WTC11 (cell line): ENCODE measurements at regions of chr5 and their contacts with region 1.

Region 1: GRCh38 chr5:175534070-175534932 is 55.9 kb downstream of the SFXN1 start:
- DNase-seq: peak; percentile 92
- ATAC-seq: peak; percentile 89
- H3K4me3 Mint-ChIP-seq: peak overlapping the region; percentile 33
- H3K27ac Mint-ChIP-seq: no peak overlapping the region
- H3K4me1 Mint-ChIP-seq: peaks cover 41% of the 10 kb centered on the region
- H3K27me3 Mint-ChIP-seq: no peaks in the 10 kb centered on the region
- CTCF ChIP-seq: peak; percentile 99

Region 2: DNA sequence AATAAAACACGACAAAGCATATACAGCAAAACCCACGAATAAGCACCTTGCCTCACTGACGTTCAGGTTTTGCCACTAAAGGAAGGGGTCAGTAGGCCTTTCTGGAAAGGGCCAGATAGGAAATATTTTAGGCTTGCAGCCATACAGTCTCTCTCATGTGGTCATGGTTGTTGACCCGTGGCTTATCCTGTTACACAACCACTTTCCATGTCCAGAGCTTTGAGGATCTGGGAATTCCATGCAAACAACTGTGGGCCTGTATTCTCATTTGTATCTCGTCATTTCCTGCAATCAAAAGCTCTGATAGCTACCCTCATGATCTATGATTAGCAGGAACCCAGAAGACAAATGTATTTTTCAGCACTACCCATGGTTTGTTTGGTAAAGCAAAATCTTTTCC is 198.6 kb before region 1 on chr5:
- CTCF ChIA-PET with region 1: no interaction called
- POLR2A ChIA-PET with region 1: no interaction called
- DNase-seq: no peak
- ATAC-seq: no peak
- H3K4me3 Mint-ChIP-seq: no peak overlapping the region
- H3K27ac Mint-ChIP-seq: no peak overlapping the region
- H3K4me1 Mint-ChIP-seq: peaks cover 4% of the 10 kb centered on the region; the same call in 1 of the 2 replicates
- H3K27me3 Mint-ChIP-seq: no peaks in the 10 kb centered on the region; the same call in 1 of the 2 replicates
- CTCF ChIP-seq: no peak

Region 3: DNA sequence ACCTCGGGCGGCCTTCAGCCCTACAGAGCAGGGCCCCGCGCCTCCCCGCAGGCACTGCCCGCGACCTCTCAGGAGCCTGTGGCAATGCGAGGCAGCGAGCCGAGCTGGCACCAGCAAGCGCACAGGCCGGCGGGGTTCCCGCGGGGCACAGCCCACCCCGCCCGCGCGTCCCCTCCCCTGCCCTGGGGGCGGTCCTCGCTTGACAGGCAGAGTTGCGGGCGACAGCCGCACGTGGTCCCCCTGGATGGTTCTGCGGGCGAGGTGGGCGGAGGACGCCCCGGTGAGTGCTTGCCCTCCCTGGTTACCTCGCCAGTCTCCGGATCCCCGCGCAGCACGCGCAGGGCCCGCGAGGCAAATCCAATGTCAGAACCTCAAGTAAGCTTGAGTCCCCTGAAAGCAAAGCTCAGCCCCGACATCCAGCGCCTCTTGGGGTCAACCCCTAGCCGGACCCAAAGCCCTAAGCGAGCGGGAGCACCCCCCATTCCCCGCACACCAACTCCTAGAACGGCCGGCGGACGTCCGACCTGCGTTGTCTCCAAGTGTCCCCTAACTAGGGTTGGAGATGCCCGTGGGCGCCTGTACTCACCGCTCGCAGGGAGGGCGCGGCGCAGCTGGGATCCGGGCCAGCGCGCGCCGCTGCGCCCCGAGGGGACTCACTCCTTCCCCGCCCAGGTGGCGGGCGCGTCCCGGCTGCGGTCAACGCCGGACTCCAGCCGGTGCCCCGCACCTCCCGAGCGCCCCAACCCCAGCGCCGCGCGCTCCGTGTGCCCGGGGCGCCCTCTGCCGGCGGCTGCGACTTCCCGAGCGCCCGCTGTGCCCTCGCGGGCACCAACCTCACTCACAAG is 90.0 kb before region 1 on chr5 and contains the start of gene DRD1:
- CTCF ChIA-PET with region 1: no interaction called
- POLR2A ChIA-PET with region 1: no interaction called
- DNase-seq: peak; percentile 79
- ATAC-seq: peak; percentile 84
- H3K4me3 Mint-ChIP-seq: peak within 1 kb of the TSS; percentile 71
- H3K27ac Mint-ChIP-seq: no peak within 1 kb of the TSS
- H3K4me1 Mint-ChIP-seq: peaks cover 33% of the 10 kb centered on the region
- H3K27me3 Mint-ChIP-seq: peaks cover 63% of the 10 kb centered on the region
- CTCF ChIP-seq: peak; percentile 87
- total RNA-seq, gene DRD1: 0.07 TPM in 2 of 3 replicates, not detected in the other

Region 4: DNA sequence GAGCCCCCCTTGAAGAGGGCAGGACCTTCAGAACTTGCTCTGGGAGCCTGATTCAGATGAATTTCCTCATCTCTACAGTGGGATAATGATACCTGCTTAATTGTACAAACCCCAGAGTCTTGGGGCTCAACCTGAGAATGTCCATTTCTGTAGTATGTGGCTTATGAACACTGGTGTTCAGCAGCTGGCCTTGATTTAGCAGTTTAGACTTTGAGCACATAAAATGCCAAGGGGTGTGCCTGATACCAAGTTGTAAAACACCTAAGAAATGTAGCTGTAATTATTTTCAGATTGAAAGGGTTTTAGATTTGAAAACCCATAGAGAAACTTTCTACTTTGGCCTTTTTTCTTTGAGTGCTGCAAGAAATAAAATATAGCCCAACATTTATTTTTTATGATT is 11.0 kb before region 1 on chr5:
- CTCF ChIA-PET with region 1: interaction called, 16 read pairs
- POLR2A ChIA-PET with region 1: interaction called, 9 read pairs
- DNase-seq: no peak
- ATAC-seq: no peak
- H3K4me3 Mint-ChIP-seq: no peak overlapping the region
- H3K27ac Mint-ChIP-seq: no peak overlapping the region
- H3K4me1 Mint-ChIP-seq: no peaks in the 10 kb centered on the region
- H3K27me3 Mint-ChIP-seq: no peaks in the 10 kb centered on the region
- CTCF ChIP-seq: no peak

Region 5: GRCh38 chr5:175579742-175580432 is 45.6 kb after region 1 on chr5:
- CTCF ChIA-PET with region 1: interaction called, 29 read pairs
- POLR2A ChIA-PET with region 1: no interaction called
- DNase-seq: no peak
- ATAC-seq: no peak
- H3K4me3 Mint-ChIP-seq: no peak overlapping the region
- H3K27ac Mint-ChIP-seq: no peak overlapping the region
- H3K4me1 Mint-ChIP-seq: peaks cover 28% of the 10 kb centered on the region
- H3K27me3 Mint-ChIP-seq: peaks cover 8% of the 10 kb centered on the region
- CTCF ChIP-seq: no peak

Region 6: GRCh38 chr5:175617447-175617846 is 83.1 kb after region 1 on chr5:
- CTCF ChIA-PET with region 1: interaction called, 61 read pairs
- POLR2A ChIA-PET with region 1: interaction called, 4 read pairs
- DNase-seq: peak; percentile 62
- ATAC-seq: peak; percentile 93
- H3K4me3 Mint-ChIP-seq: no peak overlapping the region
- H3K27ac Mint-ChIP-seq: no peak overlapping the region; the same call in 1 of the 2 replicates
- H3K4me1 Mint-ChIP-seq: peaks cover 11% of the 10 kb centered on the region
- H3K27me3 Mint-ChIP-seq: peaks cover 7% of the 10 kb centered on the region
- CTCF ChIP-seq: no peak

Region 7: DNA sequence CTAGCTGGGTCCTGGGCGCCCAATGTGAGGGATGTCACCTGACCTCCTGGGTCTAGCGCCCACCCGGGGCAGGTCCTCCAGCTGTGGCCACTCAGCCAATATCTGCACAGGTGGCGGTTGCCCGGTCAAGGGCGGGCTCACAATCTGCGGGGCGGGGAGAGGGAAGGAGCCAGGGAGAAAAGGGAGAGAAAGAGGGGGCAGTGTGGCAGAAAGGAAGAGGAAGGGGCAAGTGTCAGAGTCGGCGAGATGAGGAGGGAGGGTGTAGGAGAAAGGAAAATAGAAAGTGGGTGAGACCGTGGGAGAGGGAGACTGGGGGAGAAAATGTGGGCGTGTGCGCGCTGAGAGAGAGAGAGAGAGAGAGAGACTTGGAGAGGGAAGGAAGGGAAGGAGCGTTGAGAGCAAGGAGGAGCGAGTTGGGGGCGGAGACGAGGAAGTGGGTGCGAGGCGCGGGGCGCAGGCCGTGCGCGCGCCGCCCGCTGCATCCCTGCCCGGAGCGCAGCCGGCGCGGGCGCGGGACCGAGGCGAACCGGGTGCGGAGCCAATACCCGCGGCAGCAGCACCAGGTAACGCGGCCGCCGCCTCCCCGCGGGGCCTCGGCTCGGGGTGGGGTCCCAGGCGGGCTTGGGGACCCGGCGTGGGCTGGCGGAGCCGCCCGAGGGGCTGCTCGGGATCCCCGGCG is 123.4 kb after region 1 on chr5 and contains the start of gene HRH2:
- CTCF ChIA-PET with region 1: interaction called, 58 read pairs
- POLR2A ChIA-PET with region 1: no interaction called
- DNase-seq: peak; percentile 50
- ATAC-seq: peak; percentile 72
- H3K4me3 Mint-ChIP-seq: peak within 1 kb of the TSS; percentile 90
- H3K27ac Mint-ChIP-seq: no peak within 1 kb of the TSS
- H3K4me1 Mint-ChIP-seq: peaks cover 31% of the 10 kb centered on the region
- H3K27me3 Mint-ChIP-seq: peaks cover 13% of the 10 kb centered on the region
- CTCF ChIP-seq: no peak
- total RNA-seq, gene HRH2: 9.3 to 12.7 TPM (median 12.2 TPM) in 3 replicates

Region 8: DNA sequence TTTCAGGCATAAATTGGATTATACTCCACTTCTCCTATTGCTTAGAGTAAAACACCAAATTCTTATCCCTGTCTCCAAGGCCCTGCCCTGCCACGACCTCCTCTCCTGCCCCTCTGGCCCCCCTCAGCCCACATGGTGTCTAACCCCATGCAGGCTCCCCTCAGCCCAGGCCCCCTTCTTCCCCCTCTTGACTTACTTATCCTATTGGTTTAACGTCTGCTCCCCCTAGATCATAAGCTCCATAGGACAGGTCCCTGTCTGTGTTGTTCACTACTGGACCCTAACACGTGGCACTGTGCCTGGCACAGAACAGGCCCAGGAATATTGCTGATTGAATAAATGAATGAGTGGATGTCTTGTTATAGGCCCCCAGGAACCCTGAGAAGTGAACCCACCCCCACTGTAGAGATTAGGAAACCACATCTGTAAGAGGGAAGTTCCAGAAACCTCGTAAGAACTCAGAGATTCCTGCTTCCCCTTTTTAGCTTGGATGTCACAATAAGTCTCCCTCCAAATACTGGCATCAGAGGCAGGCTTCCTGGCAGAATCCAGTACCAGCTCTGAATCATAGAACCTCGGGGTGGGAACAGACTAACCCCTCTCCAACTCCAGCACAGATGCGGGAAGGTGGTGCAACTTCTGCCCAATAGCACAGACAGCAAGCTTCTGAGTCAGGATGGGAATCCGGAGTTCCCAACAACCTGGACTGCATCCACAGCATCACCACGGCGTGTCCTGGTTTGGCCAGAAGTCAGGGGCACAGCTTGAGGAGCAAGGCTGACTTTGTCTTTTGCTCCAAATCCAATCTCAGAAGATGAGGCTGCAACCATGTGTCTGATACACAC is 155.1 kb after region 1 on chr5:
- CTCF ChIA-PET with region 1: interaction called, 84 read pairs
- POLR2A ChIA-PET with region 1: no interaction called
- DNase-seq: no peak
- ATAC-seq: no peak
- H3K4me3 Mint-ChIP-seq: no peak overlapping the region
- H3K27ac Mint-ChIP-seq: no peak overlapping the region
- H3K4me1 Mint-ChIP-seq: peaks cover 21% of the 10 kb centered on the region
- H3K27me3 Mint-ChIP-seq: no peaks in the 10 kb centered on the region
- CTCF ChIP-seq: no peak

Region 9: DNA sequence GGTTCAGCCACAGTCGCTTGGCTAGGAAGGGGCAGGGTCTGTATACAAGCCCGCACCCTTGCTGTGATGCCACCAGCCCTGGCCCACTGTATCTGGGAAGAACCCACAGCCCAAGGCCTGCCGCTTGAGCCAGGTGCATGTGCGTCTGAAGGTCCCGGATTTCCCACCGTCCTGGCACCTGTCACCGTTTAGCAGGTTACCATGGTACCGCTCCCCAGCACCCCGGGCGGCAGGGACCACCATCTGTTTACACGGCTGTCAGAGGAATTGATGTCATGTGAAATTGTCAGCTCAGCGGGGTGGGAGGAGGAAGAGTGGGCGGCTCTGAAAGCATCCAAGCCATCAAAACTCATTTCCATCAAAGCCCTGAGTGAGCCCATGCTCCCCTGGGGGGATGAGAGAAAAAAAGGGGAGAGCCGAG is 216.2 kb after region 1 on chr5:
- CTCF ChIA-PET with region 1: no interaction called
- POLR2A ChIA-PET with region 1: no interaction called
- DNase-seq: no peak
- ATAC-seq: no peak
- H3K4me3 Mint-ChIP-seq: no peak overlapping the region
- H3K27ac Mint-ChIP-seq: no peak overlapping the region
- H3K4me1 Mint-ChIP-seq: peaks cover 38% of the 10 kb centered on the region
- H3K27me3 Mint-ChIP-seq: no peaks in the 10 kb centered on the region
- CTCF ChIP-seq: no peak

Region 10: DNA sequence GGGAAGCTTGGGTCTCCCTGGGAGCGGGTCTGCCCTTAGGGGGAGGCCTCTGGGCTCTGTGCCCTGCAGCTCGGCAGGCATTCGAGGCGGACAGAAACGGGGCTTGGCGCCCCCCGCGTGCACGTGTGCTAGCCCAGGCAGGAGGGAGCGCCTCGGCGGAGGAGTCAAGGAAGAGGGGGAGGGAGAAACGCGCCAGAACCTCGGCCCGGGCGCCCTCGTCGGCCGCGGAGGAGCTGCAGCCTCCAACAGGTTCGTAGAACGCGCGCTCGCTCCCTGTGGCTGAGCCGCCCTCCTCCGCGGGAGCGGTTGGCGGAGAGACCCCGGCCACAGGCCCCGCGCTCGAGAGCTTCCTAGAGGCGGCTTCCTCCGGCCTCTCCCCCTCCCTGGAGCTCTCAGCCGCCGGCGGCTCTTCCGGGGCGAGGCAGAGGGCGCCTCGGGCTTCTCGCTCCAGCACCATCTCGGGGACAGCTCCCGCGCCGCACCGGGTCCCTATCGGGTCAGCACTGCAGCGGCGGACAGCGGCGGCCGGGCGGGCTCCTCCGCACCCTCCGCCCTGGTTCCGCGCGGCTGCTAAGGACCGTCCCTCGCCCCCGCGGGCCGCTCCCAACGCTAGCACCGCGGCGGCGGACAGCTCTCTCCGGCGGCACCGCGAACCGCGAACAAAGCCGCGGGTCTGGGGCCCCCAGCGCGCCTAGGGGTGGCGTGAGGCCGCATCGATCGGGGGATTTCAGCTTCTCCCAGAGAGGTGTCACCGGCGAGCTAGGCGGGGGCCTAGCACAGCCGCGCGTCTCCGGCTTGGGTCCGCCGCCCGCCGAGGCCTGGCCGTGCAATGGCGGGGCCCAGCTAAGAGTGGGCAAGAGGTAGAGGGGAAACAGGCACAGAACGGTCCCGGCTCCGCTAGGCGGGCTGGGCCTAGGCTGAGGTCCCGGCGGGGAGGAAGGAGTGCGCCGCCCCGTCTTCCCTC is 262.5 kb after region 1 on chr5:
- CTCF ChIA-PET with region 1: interaction called, 19 read pairs
- POLR2A ChIA-PET with region 1: no interaction called
- DNase-seq: peak; percentile 94
- ATAC-seq: peak; percentile 88
- H3K4me3 Mint-ChIP-seq: peak overlapping the region; percentile 80
- H3K27ac Mint-ChIP-seq: no peak overlapping the region
- H3K4me1 Mint-ChIP-seq: peaks cover 33% of the 10 kb centered on the region
- H3K27me3 Mint-ChIP-seq: peaks cover 35% of the 10 kb centered on the region
- CTCF ChIP-seq: no peak